ENCODE measurements at regions of chr2 and their contacts with region 1.

Region 1: DNA sequence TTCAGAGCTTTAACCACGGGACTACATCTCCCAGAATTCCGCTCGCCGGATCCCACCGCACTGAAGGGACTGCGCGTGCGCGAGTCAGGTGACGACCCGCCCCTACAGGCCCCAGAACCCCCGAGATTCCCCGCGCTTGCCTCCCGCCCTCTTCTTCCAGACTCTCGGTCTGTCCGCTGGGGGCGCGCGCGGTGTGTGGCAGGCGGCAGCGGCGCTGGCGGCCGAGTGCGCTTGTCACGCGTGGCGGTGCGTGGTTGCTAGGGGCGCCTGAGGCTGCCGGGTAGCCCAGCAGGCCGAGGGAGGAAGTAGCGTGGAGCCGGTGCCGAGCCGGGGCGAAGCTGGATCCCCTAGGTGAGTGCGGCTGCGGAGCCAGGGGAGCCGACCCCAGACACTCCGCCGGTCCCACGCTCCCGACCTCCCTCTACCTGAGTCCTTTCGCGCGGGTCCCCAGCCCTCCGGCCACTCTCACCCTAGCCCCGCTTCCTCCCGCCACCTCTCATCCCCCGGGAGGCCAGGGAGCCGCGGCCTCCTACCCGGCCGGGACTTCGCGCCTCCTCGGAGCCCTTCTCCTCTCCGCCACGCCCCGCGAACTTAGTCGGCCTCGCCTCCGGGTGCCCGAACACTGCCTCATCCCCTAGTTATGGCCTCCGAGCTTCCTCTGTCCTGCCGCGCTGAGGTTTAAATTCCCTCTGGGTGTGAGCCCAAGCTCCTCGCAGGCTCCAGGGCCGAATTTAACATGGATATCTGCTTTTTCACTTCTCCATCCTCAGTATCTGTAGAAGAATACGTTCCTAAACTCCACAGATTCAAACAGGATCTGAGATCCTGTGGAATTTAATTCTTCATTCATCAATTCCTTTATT is at the start of gene TTLL4:
- DNase-seq: peak; percentile 99
- H3K4me3 ChIP-seq: peak within 1 kb of the TSS; percentile 67 to 93 (median 77)
- H3K27ac ChIP-seq: peak within 1 kb of the TSS; percentile 89 to 98 (median 92)
- H3K4me1 ChIP-seq: peaks cover 0 to 11% (median 10%) of the 10 kb centered on the region in 4 donors
- H3K27me3 ChIP-seq: no peaks in the 10 kb centered on the region
- CTCF ChIP-seq: peak; percentile 83 to 95 (median 90)
- EP300 ChIP-seq: no peak
- POLR2A ChIP-seq: peak; percentile 13 to 24
- total RNA-seq, gene TTLL4: 11.4 to 16.0 (median 12.5) TPM

Region 2: GRCh38 chr2:218781691-218782527 is 71.0 kb after region 1 on chr2 and contains the start of gene CYP27A1:
- intact Hi-C with region 1: loop called (anchors 5 kb)
- DNase-seq: peak; percentile 81
- H3K4me3 ChIP-seq: peak within 1 kb of the TSS; percentile 62 to 79 (median 72)
- H3K27ac ChIP-seq: peak within 1 kb of the TSS; percentile 79 to 84 (median 82)
- H3K4me1 ChIP-seq: peaks cover 0 to 27% (median 16%) of the 10 kb centered on the region in 4 donors
- H3K27me3 ChIP-seq: no peaks in the 10 kb centered on the region
- CTCF ChIP-seq: no peak
- EP300 ChIP-seq: no peak
- POLR2A ChIP-seq: peak in 1 of 2 donors; percentile 30
- total RNA-seq, gene CYP27A1: 21.9 to 30.1 (median 25.7) TPM

Region 3: GRCh38 chr2:218806346-218806978 is 95.5 kb after region 1 on chr2:
- intact Hi-C with region 1: loop called (anchors 1 kb)
- DNase-seq: peak; percentile 95
- H3K4me3 ChIP-seq: peak overlapping the region in 1 of 4 donors; percentile 2
- H3K27ac ChIP-seq: peak overlapping the region; percentile 71 to 86 (median 78)
- H3K4me1 ChIP-seq: peaks cover 0 to 27% (median 19%) of the 10 kb centered on the region in 4 donors
- H3K27me3 ChIP-seq: no peaks in the 10 kb centered on the region
- CTCF ChIP-seq: no peak
- EP300 ChIP-seq: peak; percentile 56 to 92 (median 72)
- POLR2A ChIP-seq: no peak

Region 4: DNA sequence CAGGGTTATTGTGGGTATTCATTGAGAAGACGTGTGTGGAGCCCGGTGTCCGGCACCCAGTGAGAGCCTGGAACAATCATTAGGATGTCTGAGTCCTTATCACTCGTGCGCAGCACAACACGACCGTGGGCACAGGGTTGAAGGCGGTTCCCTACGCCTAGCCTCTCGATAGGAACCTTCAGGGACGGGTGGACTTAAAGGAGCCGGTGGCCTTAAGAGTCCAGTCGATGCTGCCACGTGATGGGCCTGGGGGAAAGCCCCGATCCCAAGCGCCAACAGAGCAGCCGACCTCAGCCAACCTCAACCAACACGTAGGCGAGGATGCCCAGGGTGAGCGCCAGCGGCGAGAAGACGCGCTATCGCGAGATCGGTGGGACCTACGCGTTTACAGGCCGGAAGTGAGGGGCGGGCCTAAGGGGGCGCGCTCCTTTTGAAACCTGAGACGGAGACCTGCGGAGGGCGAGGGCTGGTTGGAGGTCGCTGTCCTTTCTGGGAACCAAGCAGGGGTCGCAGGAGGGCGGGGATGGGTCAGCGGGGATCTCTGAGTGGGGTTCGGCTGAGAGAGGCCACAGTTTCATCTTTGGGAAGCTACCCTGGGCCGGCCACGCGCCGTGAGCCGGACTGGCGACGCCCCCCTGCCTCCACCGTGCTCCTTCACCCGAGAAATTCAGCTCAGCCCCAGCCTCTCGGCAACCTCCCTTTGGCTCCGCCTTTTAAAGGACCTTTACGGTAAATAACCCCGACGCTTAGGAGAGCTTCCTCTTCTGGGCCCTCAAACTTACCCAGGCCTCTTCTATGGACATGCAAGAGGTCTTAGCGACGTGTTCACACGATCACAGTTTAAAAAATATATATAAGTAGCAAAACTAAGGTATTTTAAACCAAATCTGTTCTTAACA is 198.1 kb after region 1 on chr2:
- intact Hi-C with region 1: loop called (anchors 5 kb)
- DNase-seq: peak; percentile 94
- H3K4me3 ChIP-seq: peak overlapping the region; percentile 35 to 59 (median 48)
- H3K27ac ChIP-seq: peak overlapping the region in 2 of 4 donors; percentile 17 to 59
- H3K4me1 ChIP-seq: peaks cover 0 to 13% (median 9%) of the 10 kb centered on the region in 4 donors
- H3K27me3 ChIP-seq: peaks cover 0 to 19% (median 0%) of the 10 kb centered on the region in 3 donors
- CTCF ChIP-seq: no peak
- EP300 ChIP-seq: no peak
- POLR2A ChIP-seq: no peak